CD4-positive, alpha-beta memory T cell (primary cell): ENCODE measurements at regions of chr19 and their contacts with region 1.

Region 1: DNA sequence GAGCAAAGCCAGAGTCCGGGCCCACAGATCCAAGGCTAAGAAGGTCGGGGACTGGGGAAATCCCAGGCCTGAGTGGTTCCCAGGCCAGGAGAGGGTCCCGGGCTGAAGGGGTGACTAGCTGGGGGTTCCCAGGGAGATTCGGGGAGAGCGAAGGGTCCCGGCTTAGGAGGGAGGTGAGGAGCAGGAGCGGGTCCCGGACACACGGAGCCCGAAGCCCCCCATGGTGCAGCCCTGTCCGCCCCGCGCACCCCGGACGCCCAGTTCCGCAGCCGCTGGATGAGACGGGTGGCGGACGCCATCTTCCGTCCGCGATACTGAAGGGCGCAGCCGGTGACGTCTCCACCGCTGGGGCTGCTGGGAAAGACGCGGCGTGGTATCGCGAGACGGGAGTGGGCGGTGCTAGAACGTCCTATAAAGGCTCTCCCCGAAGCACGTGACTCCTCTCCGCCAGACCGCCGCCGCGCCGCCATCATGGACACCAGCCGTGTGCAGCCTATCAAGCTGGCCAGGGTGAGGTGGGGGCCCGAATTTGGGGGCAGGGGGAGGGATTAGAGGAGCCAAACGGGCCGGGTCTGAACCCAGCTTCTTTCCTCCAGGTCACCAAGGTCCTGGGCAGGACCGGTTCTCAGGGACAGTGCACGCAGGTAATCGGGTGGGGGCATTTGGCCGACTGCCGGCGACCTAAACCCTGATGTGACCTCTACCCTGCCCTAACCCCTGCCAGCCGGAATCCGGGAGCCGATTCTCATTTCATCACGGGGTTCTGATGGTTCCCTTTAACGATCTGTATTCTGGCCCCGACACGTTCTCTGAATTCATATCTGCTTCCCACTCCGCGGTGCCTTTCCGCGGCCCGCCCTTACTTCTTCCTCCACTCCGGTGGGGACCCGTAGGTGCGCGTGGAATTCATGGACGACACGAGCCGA is at the starts of genes NDUFA7 and RPS28:
- DNase-seq: peak; percentile 96 to 97 (median 97)
- H3K4me3 ChIP-seq: peak within 1 kb of the TSS; percentile 88 to 96
- H3K4me3 Mint-ChIP-seq: peak within 1 kb of the TSS; percentile 94 to 99 (median 97)
- H3K27ac ChIP-seq: peak within 1 kb of the TSS; percentile 97
- H3K27ac Mint-ChIP-seq: peak within 1 kb of the TSS; percentile 97 to 99 (median 99)
- H3K4me1 ChIP-seq: peaks cover 42% of the 10 kb centered on the region
- H3K4me1 Mint-ChIP-seq: peaks cover 9 to 44% (median 33%) of the 10 kb centered on the region in 4 donors
- H3K27me3 ChIP-seq: no peaks in the 10 kb centered on the region
- H3K27me3 Mint-ChIP-seq: no peaks in the 10 kb centered on the region
- total RNA-seq, gene NDUFA7: 30.4 to 31.0 TPM
- total RNA-seq, gene RPS28: 2,963 to 3,045 TPM

Region 2: GRCh38 chr19:8158411-8159074 is 162.8 kb before region 1 on chr19:
- CTCF ChIA-PET with region 1: no interaction called
- POLR2A ChIA-PET with region 1: no interaction called
- intact Hi-C with region 1: loop called (anchors 10 kb)
- DNase-seq: peak; percentile 57 to 70 (median 67)
- H3K4me3 ChIP-seq: no peak overlapping the region
- H3K4me3 Mint-ChIP-seq: no peak overlapping the region
- H3K27ac ChIP-seq: no peak overlapping the region
- H3K27ac Mint-ChIP-seq: peak overlapping the region in 1 of 7 donors; percentile 87
- H3K4me1 ChIP-seq: no peaks in the 10 kb centered on the region
- H3K4me1 Mint-ChIP-seq: peaks cover 4 to 6% (median 4%) of the 10 kb centered on the region in 4 donors
- H3K27me3 ChIP-seq: no peaks in the 10 kb centered on the region
- H3K27me3 Mint-ChIP-seq: peaks cover 11 to 12% of the 10 kb centered on the region in 2 donors

Region 3: DNA sequence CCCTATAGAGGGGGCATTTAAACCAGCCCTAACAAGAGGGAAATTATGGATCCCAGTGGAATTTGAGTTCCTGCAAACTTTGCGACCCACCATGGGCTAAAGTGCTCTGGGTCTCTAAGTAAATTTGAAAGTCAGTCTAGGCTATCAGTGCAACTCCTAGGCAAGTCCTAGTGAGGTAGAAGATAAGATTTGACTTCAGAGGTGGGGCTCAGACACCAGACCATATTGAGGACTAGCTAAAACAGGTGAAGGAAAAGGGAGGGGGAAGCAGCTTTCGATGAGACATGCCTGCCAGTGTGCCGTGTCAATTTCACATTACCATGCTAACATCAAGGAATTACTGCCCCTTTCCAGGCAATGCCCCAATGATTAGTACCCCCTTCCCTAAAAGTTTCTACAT is 51.6 kb before region 1 on chr19:
- CTCF ChIA-PET with region 1: interaction called, 27 read pairs
- POLR2A ChIA-PET with region 1: interaction called, 8 read pairs
- intact Hi-C with region 1: no loop called
- DNase-seq: no peak
- H3K4me3 ChIP-seq: peak overlapping the region; percentile 66 to 88
- H3K4me3 Mint-ChIP-seq: peak overlapping the region; percentile 90 to 97 (median 92)
- H3K27ac ChIP-seq: peak overlapping the region; percentile 76
- H3K27ac Mint-ChIP-seq: peak overlapping the region; percentile 86 to 97 (median 93)
- H3K4me1 ChIP-seq: peaks cover 10% of the 10 kb centered on the region
- H3K4me1 Mint-ChIP-seq: peaks cover 7 to 16% (median 11%) of the 10 kb centered on the region in 4 donors
- H3K27me3 ChIP-seq: no peaks in the 10 kb centered on the region
- H3K27me3 Mint-ChIP-seq: no peaks in the 10 kb centered on the region

Region 4: GRCh38 chr19:8307965-8308866 is 13.1 kb before region 1 on chr19 and contains the start of gene CD320:
- CTCF ChIA-PET with region 1: interaction called, 3 read pairs
- POLR2A ChIA-PET with region 1: interaction called, 25 read pairs
- intact Hi-C with region 1: loop called (anchors 1 kb)
- DNase-seq: peak; percentile 88 to 90 (median 89)
- H3K4me3 ChIP-seq: peak within 1 kb of the TSS; percentile 71 to 97
- H3K4me3 Mint-ChIP-seq: peak within 1 kb of the TSS; percentile 91 to 95 (median 92)
- H3K27ac ChIP-seq: peak within 1 kb of the TSS; percentile 74
- H3K27ac Mint-ChIP-seq: peak within 1 kb of the TSS; percentile 89 to 99 (median 96)
- H3K4me1 ChIP-seq: peaks cover 39% of the 10 kb centered on the region
- H3K4me1 Mint-ChIP-seq: peaks cover 12 to 43% (median 28%) of the 10 kb centered on the region in 4 donors
- H3K27me3 ChIP-seq: no peaks in the 10 kb centered on the region
- H3K27me3 Mint-ChIP-seq: no peaks in the 10 kb centered on the region
- total RNA-seq, gene CD320: 29.6 to 29.7 TPM

Region 5: GRCh38 chr19:8342684-8343482 is 21.6 kb after region 1 on chr19 and contains the start of gene KANK3:
- CTCF ChIA-PET with region 1: interaction called, 5 read pairs
- POLR2A ChIA-PET with region 1: interaction called, 16 read pairs
- intact Hi-C with region 1: loop called (anchors 1 kb)
- DNase-seq: peak; percentile 88 to 94 (median 89)
- H3K4me3 ChIP-seq: peak within 1 kb of the TSS; percentile 11 to 52
- H3K4me3 Mint-ChIP-seq: peak within 1 kb of the TSS; percentile 82 to 88 (median 86)
- H3K27ac ChIP-seq: peak within 1 kb of the TSS; percentile 43
- H3K27ac Mint-ChIP-seq: peak within 1 kb of the TSS; percentile 24 to 82 (median 70)
- H3K4me1 ChIP-seq: peaks cover 10% of the 10 kb centered on the region
- H3K4me1 Mint-ChIP-seq: peaks cover 0 to 13% (median 8%) of the 10 kb centered on the region in 4 donors
- H3K27me3 ChIP-seq: no peaks in the 10 kb centered on the region
- H3K27me3 Mint-ChIP-seq: peaks cover 0 to 7% of the 10 kb centered on the region in 2 donors
- total RNA-seq, gene KANK3: 5.0 to 6.3 TPM

Region 6: GRCh38 chr19:8389891-8390616 is 68.7 kb after region 1 on chr19 and contains the start of gene RAB11B:
- CTCF ChIA-PET with region 1: no interaction called
- POLR2A ChIA-PET with region 1: interaction called, 3 read pairs
- intact Hi-C with region 1: loop called (anchors 1 kb)
- DNase-seq: peak; percentile 96 to 99 (median 99)
- H3K4me3 ChIP-seq: peak within 1 kb of the TSS; percentile 65 to 81
- H3K4me3 Mint-ChIP-seq: peak within 1 kb of the TSS; percentile 89 to 97 (median 93)
- H3K27ac ChIP-seq: peak within 1 kb of the TSS; percentile 96
- H3K27ac Mint-ChIP-seq: peak within 1 kb of the TSS; percentile 91 to 99 (median 97)
- H3K4me1 ChIP-seq: peaks cover 22% of the 10 kb centered on the region
- H3K4me1 Mint-ChIP-seq: peaks cover 9 to 37% (median 29%) of the 10 kb centered on the region in 4 donors
- H3K27me3 ChIP-seq: no peaks in the 10 kb centered on the region
- H3K27me3 Mint-ChIP-seq: no peaks in the 10 kb centered on the region
- total RNA-seq, gene RAB11B: 107 to 109 TPM